ENCODE measurements at regions of chr18 and their contacts with region 1.

Region 1: GRCh38 chr18:66533693-66534092 is 70.2 kb downstream of the CDH19 start:
- DNase-seq: no peak
- H3K4me3 ChIP-seq: no peak overlapping the region
- H3K4me3 Mint-ChIP-seq: no peak overlapping the region
- H3K27ac Mint-ChIP-seq: no peak overlapping the region
- H3K4me1 ChIP-seq: no peaks in the 10 kb centered on the region
- H3K4me1 Mint-ChIP-seq: no peaks in the 10 kb centered on the region
- H3K27me3 ChIP-seq: no peaks in the 10 kb centered on the region
- H3K27me3 Mint-ChIP-seq: no peaks in the 10 kb centered on the region
- CTCF ChIP-seq: no peak

Region 2: DNA sequence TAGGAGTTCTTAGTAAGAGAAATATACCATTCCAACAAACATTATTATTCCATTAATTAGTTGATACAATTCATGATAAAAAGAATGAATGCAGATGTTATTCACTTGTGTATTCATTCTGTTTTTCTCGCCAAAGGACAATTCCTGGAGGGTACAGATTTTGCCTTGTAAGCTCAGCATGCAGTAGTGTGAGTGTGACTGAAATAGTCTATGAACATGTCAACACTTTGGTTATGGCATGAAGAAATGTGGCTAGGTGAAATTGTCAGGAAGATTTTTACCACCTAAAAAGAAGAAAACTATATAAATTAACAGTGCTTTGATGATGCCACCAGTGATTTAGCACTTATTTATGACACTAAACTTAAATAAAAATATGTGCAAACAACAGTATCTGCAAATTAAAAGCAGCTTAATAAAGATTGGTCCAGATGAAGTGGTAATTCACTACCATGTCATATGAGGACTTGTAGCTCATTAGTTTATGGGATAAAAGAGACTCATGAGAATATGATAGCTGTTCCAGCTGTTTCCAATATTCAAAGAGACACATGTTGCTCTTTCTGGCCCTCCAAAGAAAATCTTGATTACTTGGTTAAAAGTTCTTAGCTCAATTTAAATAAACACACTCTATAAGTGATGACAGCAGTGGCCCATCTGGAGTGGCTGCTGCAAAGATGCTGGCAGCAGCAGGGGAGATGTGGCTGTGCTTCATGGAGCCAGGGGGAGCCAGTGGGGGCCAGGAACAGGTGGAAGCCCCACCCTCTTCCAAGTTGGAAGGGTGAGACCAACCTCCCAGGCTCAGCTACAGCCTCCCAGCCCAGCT is 94.8 kb before region 1 on chr18:
- CTCF ChIA-PET with region 1: no interaction called
- POLR2A ChIA-PET with region 1: interaction called, 10 read pairs
- intact Hi-C with region 1: no loop called
- DNase-seq: no peak
- H3K4me3 ChIP-seq: no peak overlapping the region
- H3K4me3 Mint-ChIP-seq: no peak overlapping the region
- H3K27ac Mint-ChIP-seq: no peak overlapping the region
- H3K4me1 ChIP-seq: no peaks in the 10 kb centered on the region
- H3K4me1 Mint-ChIP-seq: no peaks in the 10 kb centered on the region
- H3K27me3 ChIP-seq: no peaks in the 10 kb centered on the region
- H3K27me3 Mint-ChIP-seq: no peaks in the 10 kb centered on the region
- CTCF ChIP-seq: no peak

Measured in Caco-2 (cell line).